ENCODE measurements at regions of chr10 and their contacts with region 1.

Region 1: DNA sequence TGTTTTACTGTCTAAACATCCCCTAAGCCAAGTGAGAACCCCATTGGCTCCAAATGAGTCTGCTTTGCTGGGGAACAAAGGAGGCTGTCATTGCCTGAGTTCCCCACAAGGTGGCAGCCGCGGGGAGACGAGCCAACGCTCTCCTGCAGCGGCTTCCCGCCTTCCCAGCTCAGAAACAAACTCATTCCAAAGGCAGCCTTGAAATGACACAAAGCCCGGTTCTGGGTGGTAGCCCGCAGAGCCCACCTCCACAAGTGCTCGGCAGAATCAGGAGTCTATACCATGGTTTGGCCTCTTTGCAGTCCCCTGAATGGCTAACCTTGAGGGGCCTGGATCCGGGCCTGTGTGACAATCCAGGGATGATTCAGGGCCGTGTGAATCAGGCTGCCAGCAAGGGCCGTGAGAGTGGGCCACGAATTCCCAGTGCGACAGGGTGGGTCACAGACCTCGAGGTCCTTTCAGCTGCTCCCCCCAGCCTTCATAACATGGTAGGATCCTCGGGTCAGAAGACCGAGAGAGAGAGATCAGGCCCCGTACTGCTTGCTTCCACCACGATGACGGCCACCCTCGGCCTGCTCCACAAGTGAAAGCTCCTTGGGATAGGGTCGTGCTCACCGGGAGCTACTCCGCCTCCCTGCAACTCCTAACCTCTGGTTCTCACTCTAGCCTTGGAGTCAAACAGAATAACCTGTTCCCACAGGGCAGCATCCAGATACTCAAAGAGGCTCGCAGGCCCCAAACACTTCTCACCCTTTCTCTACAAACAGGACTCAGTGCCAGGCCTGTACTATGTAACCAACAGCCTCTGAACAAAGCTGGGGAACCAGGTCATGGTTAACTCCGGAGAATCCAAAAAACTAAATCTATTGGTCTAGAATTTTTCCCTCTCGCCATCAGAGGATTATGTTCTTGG is 79.6 kb downstream of the DLG5 start:
- DNase-seq: no peak
- H3K4me3 ChIP-seq: peak overlapping the region in 3 of 4 donors; percentile 3 to 27 (median 16)
- H3K27ac ChIP-seq: peak overlapping the region; percentile 70 to 85 (median 80)
- H3K4me1 ChIP-seq: peaks cover 11 to 61% (median 54%) of the 10 kb centered on the region in 4 donors
- H3K27me3 ChIP-seq: no peaks in the 10 kb centered on the region
- CTCF ChIP-seq: peak; percentile 97 to 99 (median 98)
- EP300 ChIP-seq: no peak
- POLR2A ChIP-seq: no peak

Region 2: GRCh38 chr10:77898647-77899477 is 51.9 kb after region 1 on chr10:
- intact Hi-C with region 1: loop called (anchors 5 kb)
- DNase-seq: no peak
- H3K4me3 ChIP-seq: no peak overlapping the region
- H3K27ac ChIP-seq: peak overlapping the region in 3 of 4 donors; percentile 36 to 52 (median 42)
- H3K4me1 ChIP-seq: peaks cover 35 to 84% (median 78%) of the 10 kb centered on the region in 4 donors
- H3K27me3 ChIP-seq: no peaks in the 10 kb centered on the region
- CTCF ChIP-seq: no peak
- EP300 ChIP-seq: no peak
- POLR2A ChIP-seq: no peak

Region 3: GRCh38 chr10:77926566-77927401 is 79.8 kb after region 1 on chr10 and contains the start of gene DLG5:
- intact Hi-C with region 1: loop called (anchors 2 kb)
- DNase-seq: no peak
- H3K4me3 ChIP-seq: peak within 1 kb of the TSS; percentile 71 to 98 (median 93)
- H3K27ac ChIP-seq: peak within 1 kb of the TSS; percentile 90 to 92 (median 91)
- H3K4me1 ChIP-seq: peaks cover 24 to 57% (median 51%) of the 10 kb centered on the region in 4 donors
- H3K27me3 ChIP-seq: no peaks in the 10 kb centered on the region
- CTCF ChIP-seq: no peak
- EP300 ChIP-seq: no peak
- POLR2A ChIP-seq: no peak
- total RNA-seq, gene DLG5: 55.7 to 120 (median 76.6) TPM

Region 4: GRCh38 chr10:77970869-77971803 is 124.2 kb after region 1 on chr10:
- intact Hi-C with region 1: loop called (anchors 1 kb)
- DNase-seq: peak; percentile 96
- H3K4me3 ChIP-seq: peak overlapping the region in 3 of 4 donors; percentile 4 to 32 (median 24)
- H3K27ac ChIP-seq: peak overlapping the region; percentile 81 to 94 (median 84)
- H3K4me1 ChIP-seq: peaks cover 14 to 63% (median 61%) of the 10 kb centered on the region in 4 donors
- H3K27me3 ChIP-seq: no peaks in the 10 kb centered on the region
- CTCF ChIP-seq: no peak
- EP300 ChIP-seq: peak; percentile 95
- POLR2A ChIP-seq: no peak